Caco-2 (cell line): ENCODE measurements at regions of chr12 and their contacts with region 1.

Region 1: DNA sequence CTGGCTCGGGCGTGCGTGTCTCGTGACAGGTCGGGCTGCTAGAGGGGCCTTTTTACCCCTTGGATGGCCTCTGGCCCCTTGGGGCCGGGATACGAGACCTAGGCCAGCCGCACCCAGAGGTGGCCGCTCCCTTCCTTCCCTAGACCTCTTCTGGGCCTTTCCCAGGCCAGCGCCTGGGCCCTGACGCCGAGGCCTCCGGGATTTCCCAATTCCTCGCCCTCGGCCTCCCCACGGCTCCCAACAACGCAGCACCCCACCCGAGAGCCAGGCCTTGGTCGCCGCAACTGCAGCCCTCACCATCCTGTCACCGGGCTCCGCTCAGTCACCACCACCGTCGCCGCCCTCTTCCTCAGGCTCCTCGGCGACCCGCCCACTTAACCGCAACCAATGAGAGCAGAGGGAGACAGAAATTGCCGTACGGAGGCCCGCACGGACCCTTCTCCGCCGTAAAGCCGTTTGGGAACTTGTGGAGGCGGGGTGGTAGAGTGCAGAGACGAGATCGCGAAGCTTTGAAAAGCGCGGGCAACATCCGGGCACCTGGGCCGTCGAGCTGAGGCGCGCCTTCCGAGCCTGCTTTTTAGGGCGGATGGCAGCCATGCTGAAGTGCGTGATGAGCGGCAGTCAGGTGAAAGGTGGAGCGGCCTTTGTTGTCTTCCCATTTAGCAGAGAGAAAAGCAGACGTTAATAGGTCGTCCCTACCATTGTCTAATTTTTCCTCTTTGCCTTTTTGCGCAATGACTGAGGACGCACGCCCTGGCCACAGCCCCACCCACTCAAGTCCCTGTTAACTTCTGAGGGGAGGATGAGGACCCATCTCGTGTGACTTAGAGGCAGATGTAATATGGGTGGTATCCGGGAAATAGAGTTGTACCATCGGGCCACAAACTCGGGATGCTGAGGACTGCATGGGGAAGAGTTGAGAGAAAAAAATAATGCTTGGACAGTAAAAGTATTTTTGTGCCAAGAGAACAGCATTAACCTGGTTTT is at the starts of genes RAD9B and VPS29:
- DNase-seq: peak; percentile 99
- H3K4me3 ChIP-seq: peak within 1 kb of the TSS; percentile 55
- H3K4me3 Mint-ChIP-seq: peak within 1 kb of the TSS; percentile 95
- H3K27ac Mint-ChIP-seq: peak within 1 kb of the TSS; percentile 97
- H3K4me1 ChIP-seq: peaks cover 21% of the 10 kb centered on the region
- H3K4me1 Mint-ChIP-seq: no peaks in the 10 kb centered on the region
- H3K27me3 ChIP-seq: no peaks in the 10 kb centered on the region
- H3K27me3 Mint-ChIP-seq: no peaks in the 10 kb centered on the region
- CTCF ChIP-seq: no peak
- total RNA-seq, gene RAD9B: 2.8 and 3.8 TPM in 2 replicates
- total RNA-seq, gene VPS29: 127 and 132 TPM in 2 replicates

Region 2: GRCh38 chr12:110575326-110575725 is 73.3 kb after region 1 on chr12:
- CTCF ChIA-PET with region 1: interaction called, 12 read pairs
- POLR2A ChIA-PET with region 1: no interaction called
- intact Hi-C with region 1: no loop called
- DNase-seq: peak; percentile 46 to 63
- H3K4me3 ChIP-seq: no peak overlapping the region
- H3K4me3 Mint-ChIP-seq: no peak overlapping the region
- H3K27ac Mint-ChIP-seq: no peak overlapping the region
- H3K4me1 ChIP-seq: peaks cover 20% of the 10 kb centered on the region
- H3K4me1 Mint-ChIP-seq: peaks cover 23% of the 10 kb centered on the region
- H3K27me3 ChIP-seq: no peaks in the 10 kb centered on the region
- H3K27me3 Mint-ChIP-seq: no peaks in the 10 kb centered on the region
- CTCF ChIP-seq: no peak